Activated T-helper 2 cell treated with anti-CD3 and anti-CD28 coated beads, Interferon-gamma antibody, Interleukin-2, Interleukin-4, amounts not matched to agents 10 μg/mL and 5 μg/mL and 100 μg/mL, durations not matched to agents 14 hours and 24 hours and 36 hours (primary cell): ENCODE measurements at regions of chr6 and their contacts with region 1.

Region 1: DNA sequence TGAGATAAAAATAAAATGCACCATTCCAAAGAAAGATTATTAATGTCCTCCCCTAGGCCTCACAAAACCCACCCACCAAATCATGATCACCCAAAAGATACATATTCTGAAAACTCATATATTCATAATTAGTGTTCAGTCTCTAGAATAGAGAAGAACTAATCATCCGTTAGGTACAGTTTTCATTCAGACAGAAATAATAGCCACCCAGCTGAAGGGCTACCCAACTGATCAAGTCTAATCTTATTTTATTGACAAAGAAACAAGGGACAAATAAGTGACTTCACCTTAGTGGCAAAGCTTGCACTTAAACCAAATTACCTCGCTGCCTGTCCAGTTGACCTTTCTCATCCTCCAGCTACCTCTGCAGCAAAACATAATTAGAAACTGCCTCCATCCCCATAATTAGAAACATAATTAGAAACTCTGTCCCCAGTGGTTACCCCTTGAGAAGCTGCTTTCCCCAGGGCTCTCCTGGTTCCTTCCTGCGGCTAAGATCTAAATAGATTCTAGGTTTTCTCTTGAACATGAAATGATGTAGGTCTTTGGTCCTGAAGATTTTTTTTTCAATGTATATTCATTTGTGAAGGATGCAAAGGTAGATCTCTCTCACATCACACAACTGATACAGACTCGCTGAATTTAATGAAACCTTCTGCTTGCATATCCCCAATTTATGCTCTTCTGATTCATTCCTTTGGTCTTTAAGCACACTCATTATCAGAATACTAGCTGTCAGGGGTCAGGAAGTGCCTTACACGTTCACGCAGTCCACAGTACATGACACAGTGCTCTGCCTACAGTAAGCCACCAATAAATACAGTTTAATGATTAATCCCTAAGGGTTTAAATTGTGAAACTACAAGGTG is 46.3 kb downstream of the HBS1L start:
- DNase-seq: no peak
- H3K4me3 Mint-ChIP-seq: peak overlapping the region; percentile 13
- H3K27ac Mint-ChIP-seq: peak overlapping the region; percentile 62
- H3K4me1 Mint-ChIP-seq: peaks cover 41% of the 10 kb centered on the region
- H3K27me3 Mint-ChIP-seq: no peaks in the 10 kb centered on the region

Region 2: GRCh38 chr6:134961366-134961765 is 46.9 kb before region 1 on chr6:
- intact Hi-C with region 1: loop called (anchors 5 kb)
- DNase-seq: no peak
- H3K4me3 Mint-ChIP-seq: no peak overlapping the region
- H3K27ac Mint-ChIP-seq: peak overlapping the region; percentile 4
- H3K4me1 Mint-ChIP-seq: peaks cover 25% of the 10 kb centered on the region
- H3K27me3 Mint-ChIP-seq: no peaks in the 10 kb centered on the region